Ovary (tissue), 10 donors: ENCODE measurements at regions of chr4 and their contacts with region 1.

Region 1: GRCh38 chr4:34108391-34108790 is 2135.9 kb downstream of the ARAP2 start:
- DNase-seq: no peak
- H3K4me3 ChIP-seq: no peak overlapping the region
- H3K27ac ChIP-seq: no peak overlapping the region
- H3K4me1 ChIP-seq: no peaks in the 10 kb centered on the region
- H3K27me3 ChIP-seq: no peaks in the 10 kb centered on the region
- CTCF ChIP-seq: no peak
- EP300 ChIP-seq: no peak
- POLR2A ChIP-seq: no peak

Region 2: GRCh38 chr4:33954759-33955158 is 153.6 kb before region 1 on chr4:
- intact Hi-C with region 1: no loop called
- DNase-seq: no peak
- H3K4me3 ChIP-seq: no peak overlapping the region
- H3K27ac ChIP-seq: no peak overlapping the region
- H3K4me1 ChIP-seq: no peaks in the 10 kb centered on the region
- H3K27me3 ChIP-seq: no peaks in the 10 kb centered on the region
- CTCF ChIP-seq: no peak
- EP300 ChIP-seq: no peak
- POLR2A ChIP-seq: no peak

Region 3: GRCh38 chr4:34619531-34620162 is 511.3 kb after region 1 on chr4:
- intact Hi-C with region 1: no loop called
- DNase-seq: no peak
- H3K4me3 ChIP-seq: no peak overlapping the region
- H3K27ac ChIP-seq: no peak overlapping the region
- H3K4me1 ChIP-seq: no peaks in the 10 kb centered on the region
- H3K27me3 ChIP-seq: no peaks in the 10 kb centered on the region
- CTCF ChIP-seq: no peak
- EP300 ChIP-seq: no peak
- POLR2A ChIP-seq: no peak

Region 4: GRCh38 chr4:35342833-35343232 is 1234.4 kb after region 1 on chr4:
- intact Hi-C with region 1: loop called in 1 of 4 experiments (anchors 5 kb)
- DNase-seq: no peak
- H3K4me3 ChIP-seq: no peak overlapping the region
- H3K27ac ChIP-seq: no peak overlapping the region
- H3K4me1 ChIP-seq: no peaks in the 10 kb centered on the region
- H3K27me3 ChIP-seq: no peaks in the 10 kb centered on the region
- CTCF ChIP-seq: no peak
- EP300 ChIP-seq: no peak
- POLR2A ChIP-seq: no peak